MCF 10A (cell line): ENCODE measurements at regions of chr6 and their contacts with region 1.

Region 1: GRCh38 chr6:28383235-28384142 is 16.1 kb downstream of the ZSCAN12 start:
- DNase-seq: peak; percentile 80
- H3K4me3 Mint-ChIP-seq: peak overlapping the region; percentile 82
- H3K27ac Mint-ChIP-seq: peak overlapping the region; percentile 96
- H3K4me1 Mint-ChIP-seq: peaks cover 14% of the 10 kb centered on the region
- H3K27me3 Mint-ChIP-seq: no peaks in the 10 kb centered on the region
- CTCF ChIP-seq: peak; percentile 48

Region 2: DNA sequence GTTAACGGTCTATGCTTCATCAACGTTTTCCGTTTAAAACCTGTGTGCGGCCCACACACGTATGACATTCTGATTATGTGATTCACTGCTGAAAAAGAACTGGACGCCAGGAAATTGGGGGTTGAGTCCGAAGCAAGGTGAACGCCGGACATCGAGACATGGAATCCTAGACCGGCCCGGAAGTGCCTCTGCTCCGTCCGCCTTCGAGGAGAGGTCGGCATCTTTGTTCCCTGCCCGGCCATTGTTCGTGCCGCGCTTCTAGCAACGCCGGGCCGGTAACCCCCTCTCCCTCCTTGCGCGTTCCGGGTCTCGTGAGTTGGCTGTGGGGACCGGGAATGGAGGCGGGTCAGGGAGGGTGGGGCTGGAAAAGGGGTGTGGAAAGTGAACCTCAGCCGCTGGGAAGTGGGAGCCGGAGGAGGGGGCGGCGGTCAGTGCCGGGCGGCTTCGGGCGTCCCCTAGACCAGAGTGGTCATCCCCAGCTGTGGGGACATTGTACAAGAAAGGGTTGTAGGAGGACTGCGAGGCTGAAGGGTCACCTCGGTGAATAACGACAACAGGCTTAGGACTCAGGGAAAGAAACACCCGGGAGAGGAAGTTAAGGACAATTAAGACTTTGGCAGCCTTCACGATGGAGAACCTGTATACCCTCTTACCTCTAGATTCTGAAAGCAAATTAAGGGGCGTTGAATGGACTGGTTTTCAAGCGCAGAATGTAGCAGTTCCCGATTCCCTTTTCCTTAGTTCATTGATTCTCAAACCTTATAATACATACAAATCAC is 158.2 kb before region 1 on chr6 and contains the start of gene ZSCAN9:
- CTCF ChIA-PET with region 1: no interaction called
- POLR2A ChIA-PET with region 1: interaction called, 6 read pairs
- intact Hi-C with region 1: loop called (anchors 1 kb)
- DNase-seq: peak; percentile 93
- H3K4me3 Mint-ChIP-seq: peak within 1 kb of the TSS; percentile 94
- H3K27ac Mint-ChIP-seq: peak within 1 kb of the TSS; percentile 97
- H3K4me1 Mint-ChIP-seq: peaks cover 16% of the 10 kb centered on the region
- H3K27me3 Mint-ChIP-seq: no peaks in the 10 kb centered on the region
- CTCF ChIP-seq: no peak
- total RNA-seq, gene ZSCAN9: 13.7 and 15.6 TPM in 2 replicates

Region 3: DNA sequence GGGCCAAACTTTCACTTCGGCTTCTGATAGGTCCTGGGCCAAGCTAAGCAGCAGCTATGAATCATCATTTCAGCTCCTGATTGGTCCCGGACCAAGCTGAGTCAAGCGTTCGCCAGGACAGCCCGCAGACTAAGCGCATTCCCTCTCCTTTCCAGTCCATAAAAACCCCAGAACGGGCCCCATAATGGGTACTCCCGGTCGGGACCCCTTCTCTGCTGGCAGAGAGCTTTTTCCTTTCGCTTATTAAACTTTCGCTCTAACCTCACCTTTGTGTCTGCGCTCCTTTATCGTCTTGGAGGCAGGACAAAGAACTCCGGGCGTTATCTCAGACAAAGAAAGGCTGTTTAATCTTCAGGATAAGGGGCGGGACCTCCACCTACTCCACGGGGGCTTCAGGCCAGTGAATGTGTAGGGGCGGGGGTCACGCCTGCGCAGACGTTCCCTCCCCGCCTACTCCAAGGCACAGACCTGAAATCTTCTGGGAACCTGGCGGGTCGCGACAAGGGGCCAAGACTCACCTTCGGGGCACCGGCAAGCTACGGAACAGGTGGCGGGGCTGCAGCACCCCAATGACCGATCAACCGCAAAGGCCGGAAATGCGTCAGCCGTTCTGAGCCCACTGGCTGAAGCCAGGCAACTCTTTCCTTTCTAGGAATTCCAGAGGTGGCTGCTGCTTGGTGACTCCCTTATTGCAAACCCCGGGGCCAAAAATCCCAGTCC is 47.8 kb before region 1 on chr6 and contains the start of gene ZSCAN31:
- CTCF ChIA-PET with region 1: no interaction called
- POLR2A ChIA-PET with region 1: interaction called, 21 read pairs
- intact Hi-C with region 1: no loop called
- DNase-seq: peak; percentile 98
- H3K4me3 Mint-ChIP-seq: no peak within 1 kb of the TSS
- H3K27ac Mint-ChIP-seq: no peak within 1 kb of the TSS
- H3K4me1 Mint-ChIP-seq: no peaks in the 10 kb centered on the region
- H3K27me3 Mint-ChIP-seq: no peaks in the 10 kb centered on the region
- CTCF ChIP-seq: no peak
- total RNA-seq, gene ZSCAN31: 5.0 and 6.7 TPM in 2 replicates

Region 4: DNA sequence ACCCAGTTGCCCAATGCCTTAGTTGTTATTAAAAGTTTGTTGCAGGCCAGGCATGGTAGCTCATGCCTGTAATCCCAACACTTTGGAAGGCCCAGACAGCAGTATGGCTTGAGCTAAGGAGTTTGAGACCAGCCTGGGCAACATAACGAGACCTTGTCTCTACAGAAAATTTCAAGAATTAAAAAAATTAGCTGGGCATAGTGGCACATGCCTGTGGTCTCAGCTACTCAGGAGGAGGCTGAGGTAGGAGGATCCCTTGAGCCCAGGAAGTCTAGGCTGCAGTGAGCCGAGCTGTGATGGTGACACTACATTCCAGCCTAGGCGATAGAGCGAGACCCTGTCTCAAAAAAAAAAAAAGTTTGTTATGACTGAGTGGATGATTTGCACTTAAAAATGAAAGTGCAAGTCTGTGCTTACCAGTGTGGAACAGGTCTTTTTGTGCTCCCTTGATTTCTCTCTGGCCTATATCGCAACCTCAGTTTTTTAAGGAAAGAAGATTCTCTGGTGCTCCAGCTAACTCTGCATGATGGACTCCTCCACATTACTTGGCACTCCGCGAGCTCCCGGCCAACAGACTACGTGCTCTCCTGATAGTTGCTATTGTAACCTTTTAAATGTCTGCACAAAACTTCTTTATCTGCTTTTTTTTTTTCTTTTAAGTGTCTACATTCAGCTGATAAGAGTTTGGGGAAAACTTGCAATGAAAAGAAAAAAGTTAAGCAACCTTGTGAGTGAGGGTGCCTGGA is 11.6 kb before region 1 on chr6:
- CTCF ChIA-PET with region 1: interaction called, 4 read pairs
- POLR2A ChIA-PET with region 1: interaction called, 19 read pairs
- intact Hi-C with region 1: no loop called
- DNase-seq: no peak
- H3K4me3 Mint-ChIP-seq: no peak overlapping the region
- H3K27ac Mint-ChIP-seq: no peak overlapping the region
- H3K4me1 Mint-ChIP-seq: no peaks in the 10 kb centered on the region
- H3K27me3 Mint-ChIP-seq: no peaks in the 10 kb centered on the region
- CTCF ChIP-seq: no peak

Region 5: GRCh38 chr6:28393911-28394662 is 10.6 kb after region 1 on chr6:
- CTCF ChIA-PET with region 1: interaction called, 30 read pairs
- POLR2A ChIA-PET with region 1: interaction called, 32 read pairs
- intact Hi-C with region 1: no loop called
- DNase-seq: peak; percentile 35
- H3K4me3 Mint-ChIP-seq: no peak overlapping the region
- H3K27ac Mint-ChIP-seq: no peak overlapping the region
- H3K4me1 Mint-ChIP-seq: peaks cover 31% of the 10 kb centered on the region
- H3K27me3 Mint-ChIP-seq: no peaks in the 10 kb centered on the region
- CTCF ChIP-seq: peak; percentile 33

Region 6: DNA sequence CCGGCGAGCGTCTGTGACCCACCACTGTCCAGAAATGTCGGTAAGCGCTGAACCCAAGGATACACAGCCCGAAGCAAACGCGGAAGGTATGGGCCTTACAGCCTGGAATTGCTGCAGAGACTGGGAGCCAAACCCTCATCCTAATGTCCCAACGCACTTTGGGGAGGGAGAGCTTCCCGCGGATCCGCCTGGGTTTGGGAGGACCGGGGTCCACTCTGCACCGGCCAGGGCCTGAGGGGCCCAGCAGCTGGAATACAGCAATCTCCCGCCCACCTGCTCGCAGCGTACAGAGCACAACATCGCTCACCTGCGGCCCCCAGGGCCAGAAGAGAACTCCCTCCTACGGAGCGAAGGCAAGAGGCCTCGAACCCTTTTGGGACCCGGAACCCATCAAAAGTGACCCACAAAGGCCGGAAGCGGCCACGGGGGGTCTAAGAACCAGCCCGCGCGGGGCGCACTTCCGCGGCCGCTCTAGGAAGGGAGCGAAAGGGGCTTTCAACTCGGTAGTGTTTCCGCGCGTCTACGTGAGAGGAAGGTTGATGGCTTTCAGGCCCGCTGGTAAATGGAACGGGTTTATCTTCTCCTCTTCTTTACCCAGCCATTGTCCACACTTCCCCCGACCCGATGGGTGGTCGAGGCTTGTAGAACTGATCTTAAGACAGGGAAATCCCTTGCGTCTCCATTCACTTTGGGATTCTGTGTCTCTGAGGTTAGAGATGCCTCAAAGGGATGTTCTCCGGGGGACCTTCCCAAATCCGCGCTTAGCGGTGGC is 16.0 kb after region 1 on chr6 and contains the start of gene ZSCAN12:
- CTCF ChIA-PET with region 1: interaction called, 30 read pairs
- POLR2A ChIA-PET with region 1: interaction called, 32 read pairs
- intact Hi-C with region 1: no loop called
- DNase-seq: peak; percentile 78
- H3K4me3 Mint-ChIP-seq: peak within 1 kb of the TSS; percentile 81
- H3K27ac Mint-ChIP-seq: peak within 1 kb of the TSS; percentile 85
- H3K4me1 Mint-ChIP-seq: peaks cover 36% of the 10 kb centered on the region
- H3K27me3 Mint-ChIP-seq: no peaks in the 10 kb centered on the region
- CTCF ChIP-seq: no peak
- total RNA-seq, gene ZSCAN12: 4.4 and 5.3 TPM in 2 replicates